Activated CD4-positive, alpha-beta memory T cell treated with anti-CD3 and anti-CD28 coated beads for 36 hours (primary cell): ENCODE measurements at regions of chr2 and their contacts with region 1.

Region 1: GRCh38 chr2:64144057-64145013 is at the start of gene PELI1:
- DNase-seq: peak; percentile 97
- H3K4me3 Mint-ChIP-seq: peak within 1 kb of the TSS; percentile 96
- H3K27ac Mint-ChIP-seq: peak within 1 kb of the TSS; percentile 97
- H3K4me1 Mint-ChIP-seq: peaks cover 24% of the 10 kb centered on the region
- H3K27me3 Mint-ChIP-seq: no peaks in the 10 kb centered on the region
- total RNA-seq, gene PELI1: 38.4 to 42.9 TPM

Region 2: GRCh38 chr2:63856303-63856603 is 288.1 kb before region 1 on chr2:
- CTCF ChIA-PET with region 1: no interaction called
- POLR2A ChIA-PET with region 1: no interaction called
- intact Hi-C with region 1: loop called (anchors 5 kb)
- DNase-seq: peak; percentile 77
- H3K4me3 Mint-ChIP-seq: peak overlapping the region; percentile 54
- H3K27ac Mint-ChIP-seq: peak overlapping the region; percentile 90
- H3K4me1 Mint-ChIP-seq: peaks cover 59% of the 10 kb centered on the region
- H3K27me3 Mint-ChIP-seq: no peaks in the 10 kb centered on the region

Region 3: DNA sequence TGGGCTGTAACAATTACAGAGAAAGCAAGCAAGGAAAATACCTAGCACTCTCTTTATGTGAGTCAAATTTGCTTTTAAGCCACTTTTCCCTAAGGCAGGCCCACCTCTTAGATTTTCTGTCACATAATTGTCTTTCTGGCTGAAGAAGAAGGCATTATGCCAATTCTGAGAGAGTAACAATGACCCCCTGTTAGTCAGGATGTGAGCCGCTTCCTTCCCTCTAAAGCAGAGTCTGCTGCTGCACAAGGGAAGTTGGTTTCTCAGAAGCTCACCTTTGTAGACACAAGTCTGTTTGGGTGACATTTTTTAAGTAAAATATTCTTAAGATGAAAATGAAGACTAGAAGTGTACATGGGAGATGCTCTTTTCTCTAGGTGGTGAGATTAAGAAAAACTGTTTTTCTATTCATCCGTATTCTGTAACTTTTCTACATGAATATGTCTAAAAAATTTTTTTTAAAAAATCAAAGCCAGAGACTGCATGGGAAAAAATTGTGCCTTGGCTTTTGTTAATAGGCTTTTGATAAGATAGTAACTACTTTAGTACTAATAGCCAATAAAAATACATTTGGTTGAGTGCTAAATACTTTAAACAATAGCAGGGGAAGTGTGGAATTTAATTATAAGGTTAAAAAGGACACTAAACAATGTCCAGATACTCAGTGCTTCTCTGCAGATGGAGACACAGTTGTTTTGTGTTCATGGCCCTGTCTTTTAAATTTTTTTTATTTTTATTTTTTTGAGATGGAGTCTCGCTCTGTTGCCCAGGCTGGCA is 91.7 kb before region 1 on chr2:
- CTCF ChIA-PET with region 1: interaction called, 4 read pairs
- POLR2A ChIA-PET with region 1: no interaction called
- intact Hi-C with region 1: loop called (anchors 1 kb)
- DNase-seq: no peak
- H3K4me3 Mint-ChIP-seq: no peak overlapping the region
- H3K27ac Mint-ChIP-seq: no peak overlapping the region
- H3K4me1 Mint-ChIP-seq: peaks cover 36% of the 10 kb centered on the region
- H3K27me3 Mint-ChIP-seq: no peaks in the 10 kb centered on the region

Region 4: DNA sequence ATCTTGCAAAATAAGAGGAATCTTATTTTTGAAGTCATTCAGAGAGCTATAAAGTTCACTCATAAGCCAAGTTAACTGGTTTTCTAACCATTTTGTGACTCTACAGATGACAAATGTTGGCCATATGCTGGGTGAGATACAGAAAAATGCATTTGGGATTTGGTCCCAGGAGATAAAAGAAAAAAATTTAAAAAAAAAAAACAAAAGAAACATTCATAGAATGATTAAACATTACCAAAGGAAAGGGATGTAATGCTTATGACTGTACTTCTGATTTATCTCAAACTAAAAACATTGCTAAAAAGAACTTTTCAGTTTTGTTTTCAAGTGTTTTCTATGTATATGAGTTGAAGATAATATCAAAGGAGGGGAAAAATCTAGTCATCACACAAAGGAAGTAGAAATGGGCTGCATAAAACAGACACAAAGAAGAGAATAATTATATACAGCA is 43.2 kb before region 1 on chr2:
- CTCF ChIA-PET with region 1: interaction called, 3 read pairs
- POLR2A ChIA-PET with region 1: interaction called, 11 read pairs
- intact Hi-C with region 1: loop called (anchors 1 kb)
- DNase-seq: no peak
- H3K4me3 Mint-ChIP-seq: peak overlapping the region; percentile 49
- H3K27ac Mint-ChIP-seq: peak overlapping the region; percentile 78
- H3K4me1 Mint-ChIP-seq: peaks cover 63% of the 10 kb centered on the region
- H3K27me3 Mint-ChIP-seq: no peaks in the 10 kb centered on the region

Region 5: DNA sequence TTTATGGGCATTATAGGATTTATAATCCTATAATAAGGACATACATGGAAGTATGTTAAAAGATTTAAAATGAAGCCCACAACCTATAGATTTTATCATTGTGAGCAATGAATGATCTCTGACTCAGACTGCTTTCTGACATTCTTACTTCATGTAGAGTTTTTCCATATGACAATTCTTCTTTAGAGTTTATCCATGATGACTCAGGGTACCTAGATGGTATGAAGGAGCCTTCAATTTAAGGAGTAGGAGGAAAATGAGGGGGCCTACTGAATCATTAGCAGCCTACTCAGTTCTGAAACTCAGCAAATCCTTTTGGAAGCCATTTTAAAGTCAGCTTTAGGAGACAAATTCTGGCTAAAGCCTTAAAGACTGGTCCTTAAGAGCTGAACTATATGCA is 10.5 kb before region 1 on chr2:
- CTCF ChIA-PET with region 1: interaction called, 7 read pairs
- POLR2A ChIA-PET with region 1: interaction called, 8 read pairs
- intact Hi-C with region 1: loop called (anchors 1 kb)
- DNase-seq: no peak
- H3K4me3 Mint-ChIP-seq: peak overlapping the region; percentile 12
- H3K27ac Mint-ChIP-seq: peak overlapping the region; percentile 83
- H3K4me1 Mint-ChIP-seq: peaks cover 84% of the 10 kb centered on the region
- H3K27me3 Mint-ChIP-seq: no peaks in the 10 kb centered on the region

Region 6: DNA sequence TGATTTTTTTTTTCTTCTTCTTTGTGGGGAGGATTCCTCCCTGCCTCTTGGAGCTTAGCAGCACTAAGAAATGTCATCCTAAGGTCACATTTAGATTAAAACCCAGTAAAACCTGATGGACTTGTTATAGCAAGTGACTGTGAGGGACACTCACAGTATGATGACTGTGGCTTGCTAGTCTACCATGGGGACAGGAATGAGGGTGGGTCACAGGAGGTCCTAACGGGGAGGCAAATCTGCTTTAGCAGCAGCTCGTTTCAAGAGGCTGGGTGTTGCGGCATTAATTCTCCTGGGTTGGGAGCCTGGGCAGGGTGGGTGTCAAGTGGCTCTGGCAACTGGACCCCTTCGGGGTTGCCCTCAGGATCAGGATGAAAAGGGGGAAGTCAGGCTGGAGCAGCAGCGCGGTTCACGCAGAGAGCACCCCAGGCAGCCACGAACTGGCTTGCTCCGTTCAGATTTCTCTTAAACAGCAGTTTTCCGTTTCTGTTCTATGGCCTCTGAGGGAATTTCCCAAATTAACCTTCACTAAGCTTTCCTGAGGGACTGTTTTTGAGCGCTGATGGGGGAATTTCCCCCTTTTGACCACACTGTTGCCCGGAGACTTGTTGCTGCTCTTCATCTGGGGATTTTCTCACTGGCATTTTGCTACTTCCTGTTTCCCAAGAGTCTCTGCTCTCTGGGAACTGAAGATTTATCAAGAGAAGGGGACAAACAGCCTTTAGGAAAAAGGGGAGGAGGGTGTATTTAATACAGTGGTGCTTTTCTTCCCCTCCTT is 59.7 kb after region 1 on chr2:
- CTCF ChIA-PET with region 1: no interaction called
- POLR2A ChIA-PET with region 1: interaction called, 4 read pairs
- intact Hi-C with region 1: loop called (anchors 1 kb)
- DNase-seq: peak; percentile 69
- H3K4me3 Mint-ChIP-seq: peak overlapping the region; percentile 71
- H3K27ac Mint-ChIP-seq: peak overlapping the region; percentile 87
- H3K4me1 Mint-ChIP-seq: peaks cover 83% of the 10 kb centered on the region
- H3K27me3 Mint-ChIP-seq: no peaks in the 10 kb centered on the region